ENCODE measurements at regions of chr3 and their contacts with region 1.

Region 1: DNA sequence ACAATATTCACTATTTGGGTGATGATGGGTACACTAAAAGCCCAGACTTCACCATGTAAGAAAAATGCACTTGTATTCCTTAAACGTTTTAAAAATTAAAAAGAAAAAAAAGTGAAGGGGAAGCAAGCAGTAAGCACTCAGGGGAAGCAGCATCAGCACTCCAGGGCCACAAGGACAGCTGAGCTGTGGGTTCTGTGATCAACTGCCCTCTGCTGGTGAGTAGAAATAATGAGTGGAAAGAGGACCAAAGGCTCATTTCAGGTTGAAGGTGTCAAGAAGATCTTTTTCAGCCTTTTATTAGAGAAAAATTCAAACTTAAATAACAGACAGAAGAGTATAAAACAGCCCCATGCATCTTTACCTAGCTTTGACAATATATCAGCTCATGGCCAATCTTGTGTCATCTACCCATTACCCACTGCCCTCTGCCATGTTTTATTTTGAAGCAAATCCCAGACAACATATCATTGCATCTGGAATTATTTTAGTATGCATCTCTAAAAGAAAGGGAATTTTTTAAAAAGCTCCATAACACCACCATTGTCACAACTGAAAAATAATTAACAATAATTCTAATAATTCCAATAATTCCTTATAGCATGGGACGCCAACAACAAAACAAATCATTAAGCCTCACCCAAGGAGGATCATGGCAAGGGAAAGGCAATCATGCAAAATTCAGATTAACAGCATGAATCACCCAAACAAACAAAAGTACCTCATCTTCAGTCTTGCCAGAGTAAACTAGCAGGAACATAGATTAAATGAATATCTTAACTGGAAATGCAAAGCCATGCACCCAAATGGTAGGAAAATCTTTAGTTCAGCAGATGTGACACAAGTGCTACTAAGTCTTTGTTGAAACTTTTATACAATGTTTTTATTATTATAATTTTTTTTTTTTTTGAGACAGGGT is 42.5 kb downstream of the TAMM41 start:
- DNase-seq: peak in 5 of 10 donors; percentile 13 to 86 (median 26)

Region 2: DNA sequence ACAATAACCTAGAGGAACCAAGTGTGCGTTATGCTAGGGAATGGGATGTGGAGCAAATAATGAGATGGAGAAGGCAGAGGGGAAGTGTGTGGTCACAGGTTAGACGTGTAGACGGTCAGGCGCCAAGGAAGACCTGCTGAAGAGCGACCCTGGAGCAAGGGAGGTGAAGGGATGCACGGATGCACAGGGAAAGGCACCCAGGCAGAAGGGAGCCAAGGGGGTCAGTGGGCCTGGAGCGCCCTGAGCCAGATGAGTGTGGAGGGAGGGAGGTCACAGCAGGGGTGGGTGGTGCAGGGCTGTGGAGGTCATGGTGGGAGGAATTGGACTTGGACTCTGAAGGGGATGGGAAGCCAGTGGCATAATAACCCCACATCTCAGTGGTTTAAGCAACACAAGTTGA is 741.5 kb before region 1 on chr3:
- intact Hi-C with region 1: no loop called
- DNase-seq: no peak

Region 3: DNA sequence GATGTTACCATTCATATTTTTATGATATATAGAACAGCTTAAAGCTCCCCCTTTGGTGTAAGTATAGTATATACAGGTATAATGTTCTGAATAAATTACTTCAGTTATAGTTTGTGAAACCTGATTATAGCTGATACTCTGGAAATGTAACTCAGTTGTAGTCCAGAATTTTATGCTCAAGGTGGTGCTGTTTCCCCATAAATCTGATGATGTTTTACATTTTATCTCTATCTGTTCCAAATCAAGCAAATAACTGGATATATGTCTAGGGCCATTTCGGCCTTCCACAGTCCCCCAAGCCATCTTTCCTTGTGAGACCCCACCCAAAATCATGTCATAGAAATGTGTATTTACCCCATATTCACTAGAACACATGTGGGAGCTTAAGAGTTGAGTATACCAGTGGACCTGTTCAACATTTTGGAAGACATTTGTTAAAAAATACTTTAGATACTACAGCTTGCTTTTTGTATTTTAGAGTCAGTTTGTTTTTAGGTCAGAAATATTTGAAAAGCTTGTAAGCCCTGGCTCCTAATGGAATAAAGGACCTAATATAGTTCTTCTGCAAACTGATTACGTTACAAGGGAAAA is 424.9 kb before region 1 on chr3:
- intact Hi-C with region 1: loop called (anchors 5 kb)
- DNase-seq: no peak